PC-3 (cell line): ENCODE measurements at regions of chr11 and their contacts with region 1.

Region 1: GRCh38 chr11:123707606-123708205 is 33.8 kb downstream of the ZNF202 start:
- DNase-seq: peak; percentile 89
- ATAC-seq: peak; percentile 90
- H3K4me3 ChIP-seq: no peak overlapping the region
- H3K27ac ChIP-seq: no peak overlapping the region
- H3K4me1 ChIP-seq: no peaks in the 10 kb centered on the region
- H3K27me3 ChIP-seq: peaks cover 43% of the 10 kb centered on the region
- CTCF ChIP-seq: peak; percentile 96

Region 2: GRCh38 chr11:123195188-123196059 is 512.3 kb before region 1 on chr11 and contains the start of gene CLMP:
- CTCF ChIA-PET with region 1: no interaction called
- POLR2A ChIA-PET with region 1: no interaction called
- intact Hi-C with region 1: no loop called
- DNase-seq: peak; percentile 62
- ATAC-seq: peak; percentile 59
- H3K4me3 ChIP-seq: peak within 1 kb of the TSS; percentile 78
- H3K27ac ChIP-seq: peak within 1 kb of the TSS; percentile 23
- H3K4me1 ChIP-seq: peaks cover 44% of the 10 kb centered on the region
- H3K27me3 ChIP-seq: no peaks in the 10 kb centered on the region
- CTCF ChIP-seq: no peak
- total RNA-seq, gene CLMP: 30.4 and 33.0 TPM in 2 replicates

Region 3: DNA sequence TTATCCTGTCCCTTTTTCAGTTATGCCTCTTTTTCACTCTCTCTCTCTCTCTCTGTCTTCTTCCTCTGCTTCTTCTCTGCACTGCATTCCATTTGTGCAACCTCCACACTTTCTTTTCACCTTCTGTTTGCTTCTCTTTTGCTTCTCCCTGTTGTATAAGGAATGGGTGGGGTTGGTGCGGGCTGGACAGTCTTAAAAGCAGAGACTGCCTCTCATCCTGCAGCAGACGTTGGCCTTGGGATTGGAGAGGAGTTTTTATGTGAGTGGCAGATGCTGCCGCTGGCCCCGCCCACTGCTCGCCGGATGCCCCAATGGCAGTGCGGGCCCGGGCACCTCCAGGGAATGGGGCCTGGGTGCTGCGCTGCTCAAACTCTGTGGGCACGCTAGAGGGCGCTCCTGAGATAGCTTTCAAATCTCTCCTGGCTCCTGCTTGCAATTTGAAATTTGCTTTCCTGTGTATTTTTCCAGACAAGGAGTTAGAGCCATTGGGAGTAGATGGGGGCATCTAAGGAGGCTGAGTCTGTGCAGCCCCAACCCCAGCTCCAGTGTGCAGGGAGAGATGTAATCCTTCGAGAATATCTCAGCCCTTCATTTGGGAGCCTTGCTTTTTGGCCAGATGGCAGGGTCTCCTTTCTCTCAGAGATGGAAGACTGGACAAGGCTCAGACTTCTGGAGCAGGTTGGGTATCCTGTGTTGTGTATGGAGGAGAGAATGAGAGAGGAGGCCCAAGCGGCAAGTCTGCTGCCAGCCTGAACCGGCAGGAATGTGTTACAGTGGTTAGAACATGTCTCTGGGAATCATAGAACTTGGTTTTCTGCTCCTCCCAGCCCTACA is 196.5 kb before region 1 on chr11:
- CTCF ChIA-PET with region 1: no interaction called
- POLR2A ChIA-PET with region 1: no interaction called
- intact Hi-C with region 1: loop called (anchors 10 kb)
- DNase-seq: peak; percentile 96
- ATAC-seq: peak; percentile 99
- H3K4me3 ChIP-seq: no peak overlapping the region
- H3K27ac ChIP-seq: no peak overlapping the region
- H3K4me1 ChIP-seq: peaks cover 10% of the 10 kb centered on the region; the same call in 1 of the 2 replicates
- H3K27me3 ChIP-seq: no peaks in the 10 kb centered on the region
- CTCF ChIP-seq: peak; percentile 96

Region 4: GRCh38 chr11:123580557-123581275 is 127.0 kb before region 1 on chr11:
- CTCF ChIA-PET with region 1: no interaction called
- POLR2A ChIA-PET with region 1: no interaction called
- intact Hi-C with region 1: loop called (anchors 1 kb)
- DNase-seq: peak; percentile 86
- ATAC-seq: peak; percentile 68
- H3K4me3 ChIP-seq: no peak overlapping the region
- H3K27ac ChIP-seq: no peak overlapping the region
- H3K4me1 ChIP-seq: 0 out of 2 replicates have a peak, but pooled peaks cover 3% of the 10 kb centered on the region
- H3K27me3 ChIP-seq: no peaks in the 10 kb centered on the region
- CTCF ChIP-seq: peak; percentile 96

Region 5: DNA sequence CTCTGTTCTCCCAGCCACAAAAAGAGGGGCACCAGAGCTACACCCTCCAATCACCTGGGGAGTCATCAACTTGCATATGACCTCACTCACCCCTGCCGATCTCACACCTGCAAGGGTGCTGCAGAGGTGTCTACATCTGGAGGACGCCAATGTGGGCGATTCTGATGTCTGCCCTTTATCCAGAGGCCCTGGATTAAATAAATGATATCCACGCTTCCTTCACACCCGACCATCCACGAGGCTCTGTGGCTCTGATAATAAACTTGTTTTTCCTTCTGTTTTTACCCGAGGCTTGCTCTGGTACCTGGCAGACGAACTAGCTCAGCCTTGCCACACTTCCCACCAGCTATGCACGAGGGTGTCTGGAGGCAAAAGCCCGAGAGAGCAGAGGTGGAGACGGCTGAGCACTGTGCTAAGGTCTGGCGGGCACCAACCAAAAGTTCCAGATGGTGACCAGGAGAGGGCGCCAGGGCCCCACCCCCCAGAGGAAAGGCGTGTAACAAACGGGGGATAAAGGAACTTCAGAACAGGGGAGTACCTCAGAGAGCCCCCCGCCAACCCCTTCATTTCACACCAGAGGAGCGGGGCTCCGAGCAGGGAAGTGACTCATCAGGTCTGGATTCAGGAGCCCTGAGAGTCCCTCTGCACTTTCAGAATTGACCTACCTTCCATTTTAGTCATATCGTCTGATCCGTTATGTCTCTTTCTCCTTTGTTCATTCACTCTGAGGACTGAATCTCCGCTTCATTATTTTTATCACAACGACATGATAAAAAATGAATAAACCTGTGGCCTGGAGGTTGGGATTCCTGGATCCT is 66.8 kb before region 1 on chr11:
- CTCF ChIA-PET with region 1: interaction called, 6 read pairs
- POLR2A ChIA-PET with region 1: no interaction called
- intact Hi-C with region 1: loop called (anchors 1 kb)
- DNase-seq: peak; percentile 67
- ATAC-seq: peak; percentile 95
- H3K4me3 ChIP-seq: no peak overlapping the region
- H3K27ac ChIP-seq: no peak overlapping the region
- H3K4me1 ChIP-seq: 0 out of 2 replicates have a peak, but pooled peaks cover 4% of the 10 kb centered on the region
- H3K27me3 ChIP-seq: peaks cover 71% of the 10 kb centered on the region
- CTCF ChIP-seq: peak; percentile 97

Region 6: GRCh38 chr11:124608146-124608545 is 900.4 kb after region 1 on chr11:
- CTCF ChIA-PET with region 1: interaction called, 13 read pairs
- POLR2A ChIA-PET with region 1: no interaction called
- intact Hi-C with region 1: no loop called
- DNase-seq: peak; percentile 28
- ATAC-seq: no peak
- H3K4me3 ChIP-seq: no peak overlapping the region
- H3K27ac ChIP-seq: no peak overlapping the region
- H3K4me1 ChIP-seq: no peaks in the 10 kb centered on the region
- H3K27me3 ChIP-seq: 0 out of 2 replicates have a peak, but pooled peaks cover 4% of the 10 kb centered on the region
- CTCF ChIP-seq: no peak